H1 (cell line): ENCODE measurements at regions of chr6 and their contacts with region 1.

Region 1: GRCh38 chr6:42306439-42307140 is 88.9 kb upstream of the MRPS10 start:
- DNase-seq: no peak
- H3K4me3 ChIP-seq: no peak overlapping the region
- H3K27ac ChIP-seq: no peak overlapping the region
- H3K4me1 ChIP-seq: peaks cover 0 to 11% (median 5%) of the 10 kb centered on the region in 4 experiments; a peak in 4 of 7 replicates
- H3K27me3 ChIP-seq: no peaks in the 10 kb centered on the region
- CTCF ChIP-seq: no peak
- EP300 ChIP-seq: no peak
- POLR2A ChIP-seq: no peak
- RAD21 ChIP-seq: no peak

Region 2: GRCh38 chr6:42251911-42252637 is 54.5 kb before region 1 on chr6:
- CTCF ChIA-PET with region 1: no interaction called
- POLR2A ChIA-PET with region 1: no interaction called
- DNase-seq: no peak
- H3K4me3 ChIP-seq: no peak overlapping the region
- H3K27ac ChIP-seq: no peak overlapping the region
- H3K4me1 ChIP-seq: peaks cover 5 to 7% (median 7%) of the 10 kb centered on the region in 4 experiments; a peak in 5 of 7 replicates
- H3K27me3 ChIP-seq: no peaks in the 10 kb centered on the region
- CTCF ChIP-seq: no peak
- EP300 ChIP-seq: no peak
- POLR2A ChIP-seq: no peak
- RAD21 ChIP-seq: no peak

Region 3: GRCh38 chr6:42294759-42295158 is 11.8 kb before region 1 on chr6:
- CTCF ChIA-PET with region 1: interaction called, 39 read pairs
- POLR2A ChIA-PET with region 1: interaction called, 3 read pairs
- DNase-seq: no peak
- H3K4me3 ChIP-seq: no peak overlapping the region
- H3K27ac ChIP-seq: no peak overlapping the region
- H3K4me1 ChIP-seq: peaks cover 0 to 3% (median 0%) of the 10 kb centered on the region in 4 experiments; a peak in 1 of 7 replicates
- H3K27me3 ChIP-seq: no peaks in the 10 kb centered on the region
- CTCF ChIP-seq: no peak
- EP300 ChIP-seq: no peak
- POLR2A ChIP-seq: no peak
- RAD21 ChIP-seq: no peak

Region 4: DNA sequence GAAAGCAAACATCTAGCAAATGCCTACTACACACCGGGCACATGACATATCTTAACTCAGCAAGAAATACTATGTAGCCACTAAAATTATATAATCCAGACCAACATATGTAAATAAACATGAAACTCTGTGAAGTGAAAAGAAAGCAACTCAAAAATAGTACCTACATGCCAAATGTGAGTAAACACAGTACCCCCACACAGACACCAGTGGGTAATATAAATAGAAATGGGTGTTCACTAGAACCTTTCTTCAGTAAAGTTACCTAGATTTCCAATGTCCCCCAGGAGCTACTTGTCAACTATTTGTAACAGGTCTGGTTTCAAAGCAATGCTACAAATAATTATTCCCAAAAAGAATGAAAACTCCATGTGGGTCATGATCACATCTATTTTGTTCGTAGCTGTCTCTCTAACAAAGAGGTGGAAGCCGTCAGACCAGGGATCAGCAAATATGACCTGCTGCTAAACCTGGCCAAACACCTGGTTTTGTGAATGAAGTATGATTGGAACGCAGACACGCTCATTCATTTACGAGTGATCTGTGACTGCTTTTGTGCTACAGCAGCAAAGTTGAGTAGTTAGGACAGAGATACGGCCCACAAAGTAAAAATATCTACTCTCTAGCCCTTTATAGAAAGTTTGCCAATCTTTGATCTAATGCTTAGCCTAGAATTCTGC is 119.7 kb after region 1 on chr6:
- CTCF ChIA-PET with region 1: no interaction called
- POLR2A ChIA-PET with region 1: no interaction called
- DNase-seq: no peak
- H3K4me3 ChIP-seq: no peak overlapping the region
- H3K27ac ChIP-seq: no peak overlapping the region
- H3K4me1 ChIP-seq: peaks cover 4 to 13% (median 9%) of the 10 kb centered on the region in 4 experiments; a peak in 5 of 7 replicates
- H3K27me3 ChIP-seq: no peaks in the 10 kb centered on the region
- CTCF ChIP-seq: no peak
- EP300 ChIP-seq: no peak
- POLR2A ChIP-seq: no peak
- RAD21 ChIP-seq: no peak